A673 (cell line): ENCODE measurements at regions of chr7 and their contacts with region 1.

Region 1: DNA sequence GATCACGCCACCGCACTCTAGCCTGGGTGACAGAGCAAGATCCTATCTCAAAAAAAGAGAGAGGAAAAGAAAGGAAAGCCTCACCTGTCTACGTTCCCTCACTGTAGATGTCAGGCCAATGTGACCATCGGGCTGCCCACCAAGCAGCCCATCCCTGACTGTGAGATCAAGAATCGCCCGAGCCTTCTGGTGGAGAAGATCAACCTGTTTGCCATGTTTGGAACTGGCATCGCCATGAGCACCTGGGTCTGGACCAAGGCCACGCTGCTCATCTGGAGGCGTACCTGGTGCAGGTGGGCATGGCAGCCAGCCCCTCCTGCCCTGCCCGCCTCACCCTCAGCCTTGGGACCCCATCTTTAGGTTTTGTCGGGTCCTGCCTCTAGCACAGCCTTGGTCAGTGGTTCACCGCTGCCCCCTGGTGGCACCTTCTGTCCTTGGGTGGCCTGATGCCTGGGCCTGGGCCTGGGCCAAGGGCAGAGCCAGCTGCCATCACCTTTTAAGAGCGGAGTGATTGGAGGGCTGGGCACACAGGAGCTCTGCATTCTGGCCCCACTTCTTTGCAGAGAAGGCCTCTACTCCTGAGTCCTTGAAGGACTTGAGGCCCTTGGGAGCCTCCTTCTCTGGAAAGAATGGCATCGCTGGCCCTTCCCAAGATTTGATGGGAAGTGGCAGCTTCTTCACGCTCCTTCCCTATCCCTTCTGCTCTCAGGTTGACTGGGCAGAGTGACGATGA is 14.4 kb upstream of the AHCYL2 start:
- DNase-seq: peak; percentile 52
- H3K4me3 ChIP-seq: no peak overlapping the region
- H3K27ac ChIP-seq: no peak overlapping the region
- H3K4me1 ChIP-seq: no peaks in the 10 kb centered on the region
- H3K27me3 ChIP-seq: no peaks in the 10 kb centered on the region
- CTCF ChIP-seq: peak; percentile 86

Region 2: DNA sequence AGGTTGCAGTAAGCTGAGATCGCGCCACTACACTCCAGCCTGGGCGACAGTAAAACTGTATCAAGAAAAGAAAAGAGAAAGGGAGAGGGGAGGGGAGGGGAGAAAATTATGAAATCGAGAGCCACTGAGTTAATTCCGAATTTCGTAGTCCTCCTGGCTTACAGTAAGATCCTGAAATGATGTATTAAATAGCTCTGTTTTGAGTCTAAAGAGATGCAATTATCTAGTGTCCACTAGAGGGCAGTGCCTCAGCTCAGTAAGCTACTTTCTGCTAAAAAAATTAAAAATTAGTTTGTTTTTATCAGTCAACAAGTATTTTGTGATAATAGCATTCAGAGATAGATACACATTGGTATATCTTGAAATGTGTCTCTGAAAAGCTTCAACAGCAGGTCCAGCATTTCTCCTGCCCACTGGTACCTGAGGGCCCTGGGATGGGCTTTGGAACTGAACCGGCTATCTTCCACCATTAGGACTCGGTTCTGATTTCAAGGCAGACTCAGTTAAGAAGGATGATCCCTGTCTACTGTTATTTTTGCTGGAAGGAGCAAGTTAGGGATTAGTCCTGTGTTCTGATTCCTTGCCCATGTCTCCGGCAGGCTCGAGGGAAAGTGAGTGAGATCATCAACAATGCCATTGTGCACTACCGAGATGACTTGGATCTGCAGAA is 46.4 kb before region 1 on chr7:
- CTCF ChIA-PET with region 1: interaction called, 12 read pairs
- POLR2A ChIA-PET with region 1: no interaction called
- intact Hi-C with region 1: loop called (anchors 1 kb)
- DNase-seq: peak; percentile 61
- H3K4me3 ChIP-seq: no peak overlapping the region
- H3K27ac ChIP-seq: no peak overlapping the region
- H3K4me1 ChIP-seq: peaks cover 7% of the 10 kb centered on the region
- H3K27me3 ChIP-seq: no peaks in the 10 kb centered on the region
- CTCF ChIP-seq: peak; percentile 89

Region 3: DNA sequence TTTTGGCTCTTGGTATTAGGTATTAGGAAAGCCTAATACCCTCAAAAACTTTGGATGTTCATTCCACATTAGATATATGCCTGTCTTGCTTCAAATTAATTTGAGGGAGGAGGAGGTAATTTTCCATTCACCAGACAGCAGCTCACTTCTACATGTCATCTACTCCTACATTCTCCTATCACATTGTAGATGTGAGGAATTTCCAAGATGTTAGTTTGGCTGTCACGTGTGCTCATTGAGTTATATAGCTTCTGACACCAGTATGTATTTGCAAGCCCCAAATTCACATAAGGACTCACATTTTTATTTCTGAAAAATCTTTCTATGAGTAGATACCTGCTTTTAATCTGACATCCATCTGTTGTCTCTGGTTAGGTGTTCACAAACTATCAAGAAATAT is 269.4 kb after region 1 on chr7:
- CTCF ChIA-PET with region 1: no interaction called
- POLR2A ChIA-PET with region 1: interaction called, 19 read pairs
- intact Hi-C with region 1: no loop called
- DNase-seq: no peak
- H3K4me3 ChIP-seq: no peak overlapping the region
- H3K27ac ChIP-seq: no peak overlapping the region
- H3K4me1 ChIP-seq: no peaks in the 10 kb centered on the region
- H3K27me3 ChIP-seq: no peaks in the 10 kb centered on the region
- CTCF ChIP-seq: no peak